ENCODE measurements at regions of chr11 and their contacts with region 1.

Region 1: GRCh38 chr11:27158722-27159679 is 118.4 kb downstream of the BBOX1 start:
- DNase-seq: no peak

Region 2: DNA sequence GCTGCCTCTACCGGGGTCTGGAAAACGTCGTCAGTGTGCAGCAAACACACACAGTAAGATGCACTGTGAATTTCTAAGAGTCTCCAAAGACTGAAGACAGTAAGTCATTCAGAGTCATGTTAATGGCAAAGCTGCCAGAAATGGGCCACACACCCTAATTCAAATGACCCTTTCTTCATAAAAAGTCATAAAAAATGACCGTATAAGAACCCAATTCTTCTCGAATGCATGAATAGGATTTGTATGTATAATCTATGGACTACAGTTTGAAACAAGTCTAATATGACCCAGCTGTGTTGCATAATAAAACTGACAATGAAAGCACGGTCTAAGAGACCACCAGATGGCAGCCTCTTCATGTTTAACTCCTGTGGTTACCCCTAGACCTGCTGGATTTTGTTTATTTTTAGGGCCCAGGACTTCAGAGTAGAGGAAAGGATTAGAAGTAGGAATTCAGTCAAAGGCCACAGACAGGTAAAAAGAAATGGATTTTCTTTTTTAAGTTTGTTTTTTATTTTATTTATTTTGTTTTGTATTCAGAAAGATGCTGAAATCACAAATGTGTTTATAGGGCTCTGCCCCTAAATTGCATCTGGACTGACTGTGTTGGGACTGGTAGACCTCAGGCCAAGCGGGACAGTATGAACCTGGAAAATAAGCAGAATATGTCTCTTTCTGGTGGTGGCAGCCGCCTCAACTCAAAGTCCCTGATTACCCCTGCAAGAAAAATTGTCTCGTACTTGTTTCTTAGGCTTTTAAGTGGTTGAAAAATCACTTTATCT is 405.1 kb before region 1 on chr11:
- intact Hi-C with region 1: loop called (anchors 5 kb)
- DNase-seq: no peak

Region 3: DNA sequence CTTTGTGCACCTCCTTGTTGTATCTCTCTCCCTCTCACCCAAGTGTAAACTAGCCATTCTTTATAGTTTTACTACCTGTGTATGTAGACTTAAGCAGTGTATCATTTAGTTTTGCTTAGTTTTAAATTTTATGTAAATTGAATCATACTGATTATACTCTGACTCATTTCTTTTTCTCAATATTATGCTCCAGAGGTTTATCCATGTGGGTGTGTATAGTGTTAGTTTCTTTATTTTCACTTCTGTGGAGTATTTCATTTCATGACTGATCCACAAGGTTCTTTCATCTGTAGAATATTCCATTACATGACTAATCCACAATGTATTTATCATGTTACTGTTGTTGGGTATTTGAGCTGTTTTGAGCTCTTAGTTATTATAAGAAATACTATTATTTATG is 142.0 kb after region 1 on chr11:
- intact Hi-C with region 1: no loop called
- DNase-seq: no peak

Measured in cardiac septum (tissue), 1 donor.